ENCODE measurements at regions of chr7 and their contacts with region 1.

Region 1: DNA sequence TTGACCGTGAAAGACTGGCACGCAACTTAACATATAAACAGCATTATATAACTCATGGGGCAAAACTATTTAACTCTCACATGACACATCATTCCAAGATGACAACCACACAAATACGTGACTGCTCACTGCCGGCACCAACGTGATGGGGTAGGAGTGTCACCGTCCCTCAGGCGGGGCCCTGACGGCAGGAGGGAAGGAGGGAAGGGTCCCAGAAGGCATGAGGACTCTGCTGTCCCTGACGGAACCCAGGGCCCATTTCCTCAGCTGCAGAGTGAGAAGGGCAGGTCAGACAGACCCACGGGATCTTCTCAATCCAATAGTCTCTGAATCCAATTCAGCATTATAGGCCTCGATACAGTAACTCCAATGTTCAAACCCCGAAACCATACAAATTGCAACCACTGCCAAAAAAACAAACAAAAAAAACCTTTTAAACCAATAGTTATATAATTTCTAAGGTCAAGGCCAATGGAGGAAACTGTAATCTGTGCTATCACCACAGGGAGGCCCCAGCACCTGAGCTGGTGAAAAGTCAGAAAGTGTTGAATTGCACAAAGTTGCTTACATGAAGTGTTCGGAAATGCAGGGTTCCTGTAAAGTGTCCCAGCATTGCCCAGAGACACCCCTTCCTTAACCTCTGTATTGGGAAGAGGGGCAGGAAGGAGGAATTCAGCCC is 137.4 kb downstream of the TNS3 start:
- DNase-seq: peak; percentile 35 to 61 (median 55)
- H3K4me3 ChIP-seq: no peak overlapping the region
- H3K27ac ChIP-seq: no peak overlapping the region
- H3K4me1 ChIP-seq: peaks cover 0 to 22% (median 2%) of the 10 kb centered on the region in 4 experiments
- H3K27me3 ChIP-seq: no peaks in the 10 kb centered on the region

Region 2: GRCh38 chr7:47458057-47458456 is 13.5 kb after region 1 on chr7:
- CTCF ChIA-PET with region 1: interaction called, 12 read pairs
- POLR2A ChIA-PET with region 1: no interaction called
- DNase-seq: peak in 1 of 3 donors; percentile 23
- H3K4me3 ChIP-seq: no peak overlapping the region
- H3K27ac ChIP-seq: no peak overlapping the region
- H3K4me1 ChIP-seq: peaks cover 0 to 37% (median 23%) of the 10 kb centered on the region in 4 experiments
- H3K27me3 ChIP-seq: no peaks in the 10 kb centered on the region

Region 3: GRCh38 chr7:47497367-47498096 is 53.0 kb after region 1 on chr7:
- CTCF ChIA-PET with region 1: interaction called, 11 read pairs
- POLR2A ChIA-PET with region 1: no interaction called
- DNase-seq: peak in 2 of 3 donors; percentile 72 to 78
- H3K4me3 ChIP-seq: peak overlapping the region in 1 of 7 experiments; percentile 14
- H3K27ac ChIP-seq: peak overlapping the region in 1 of 2 experiments; percentile 66
- H3K4me1 ChIP-seq: peaks cover 10 to 98% (median 90%) of the 10 kb centered on the region in 4 experiments
- H3K27me3 ChIP-seq: no peaks in the 10 kb centered on the region

Region 4: GRCh38 chr7:47513741-47514241 is 69.3 kb after region 1 on chr7:
- CTCF ChIA-PET with region 1: interaction called, 10 read pairs
- POLR2A ChIA-PET with region 1: no interaction called
- DNase-seq: peak in 2 of 3 donors; percentile 79 to 89
- H3K4me3 ChIP-seq: peak overlapping the region in 3 of 7 experiments; percentile 1 to 8 (median 8)
- H3K27ac ChIP-seq: peak overlapping the region; percentile 12 to 15
- H3K4me1 ChIP-seq: peaks cover 12 to 64% (median 51%) of the 10 kb centered on the region in 4 experiments
- H3K27me3 ChIP-seq: no peaks in the 10 kb centered on the region

Region 5: DNA sequence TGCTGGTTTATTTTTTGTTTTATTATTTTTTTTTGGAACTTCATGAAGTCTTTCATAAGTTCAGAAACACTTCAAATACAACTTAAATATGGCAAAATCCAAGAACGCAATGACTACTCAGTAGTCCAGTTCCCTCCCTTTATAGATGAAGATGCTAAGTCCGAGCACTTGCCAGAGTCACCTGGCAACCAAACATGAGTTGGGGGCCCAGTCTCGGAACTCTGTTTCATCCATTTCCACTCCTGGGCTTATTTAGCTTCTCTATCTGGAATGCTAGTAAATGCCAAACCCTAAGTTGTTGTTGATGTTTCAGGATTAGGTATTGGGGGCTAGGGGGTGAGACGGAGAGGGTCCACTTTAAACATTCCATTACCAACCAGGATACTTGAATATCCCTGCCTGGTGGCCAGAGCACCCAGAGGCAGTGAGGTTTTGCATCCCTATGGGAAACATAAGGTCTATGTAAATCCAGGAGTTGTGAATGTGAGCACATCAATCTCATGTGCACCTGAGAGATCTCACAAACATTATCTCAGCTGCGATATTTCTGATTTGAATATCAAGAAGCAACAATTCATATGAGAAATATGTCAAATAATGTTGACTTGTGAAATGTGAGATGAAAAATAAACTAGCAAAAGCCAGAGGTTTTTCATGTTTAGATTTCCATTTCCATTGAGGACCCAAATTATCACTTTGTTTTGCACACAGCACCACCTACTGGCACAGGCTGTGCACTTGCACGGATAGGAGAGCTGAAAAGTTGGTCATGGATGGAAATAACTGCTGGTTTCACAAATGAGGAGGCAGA is 374.5 kb after region 1 on chr7:
- CTCF ChIA-PET with region 1: interaction called, 16 read pairs
- POLR2A ChIA-PET with region 1: no interaction called
- DNase-seq: peak; percentile 64 to 86 (median 79)
- H3K4me3 ChIP-seq: no peak overlapping the region
- H3K27ac ChIP-seq: no peak overlapping the region
- H3K4me1 ChIP-seq: peaks cover 0 to under 1% (median under 1%) of the 10 kb centered on the region in 4 experiments
- H3K27me3 ChIP-seq: no peaks in the 10 kb centered on the region